AG04450 (cell line): ENCODE measurements at regions of chr2 and their contacts with region 1.

Region 1: DNA sequence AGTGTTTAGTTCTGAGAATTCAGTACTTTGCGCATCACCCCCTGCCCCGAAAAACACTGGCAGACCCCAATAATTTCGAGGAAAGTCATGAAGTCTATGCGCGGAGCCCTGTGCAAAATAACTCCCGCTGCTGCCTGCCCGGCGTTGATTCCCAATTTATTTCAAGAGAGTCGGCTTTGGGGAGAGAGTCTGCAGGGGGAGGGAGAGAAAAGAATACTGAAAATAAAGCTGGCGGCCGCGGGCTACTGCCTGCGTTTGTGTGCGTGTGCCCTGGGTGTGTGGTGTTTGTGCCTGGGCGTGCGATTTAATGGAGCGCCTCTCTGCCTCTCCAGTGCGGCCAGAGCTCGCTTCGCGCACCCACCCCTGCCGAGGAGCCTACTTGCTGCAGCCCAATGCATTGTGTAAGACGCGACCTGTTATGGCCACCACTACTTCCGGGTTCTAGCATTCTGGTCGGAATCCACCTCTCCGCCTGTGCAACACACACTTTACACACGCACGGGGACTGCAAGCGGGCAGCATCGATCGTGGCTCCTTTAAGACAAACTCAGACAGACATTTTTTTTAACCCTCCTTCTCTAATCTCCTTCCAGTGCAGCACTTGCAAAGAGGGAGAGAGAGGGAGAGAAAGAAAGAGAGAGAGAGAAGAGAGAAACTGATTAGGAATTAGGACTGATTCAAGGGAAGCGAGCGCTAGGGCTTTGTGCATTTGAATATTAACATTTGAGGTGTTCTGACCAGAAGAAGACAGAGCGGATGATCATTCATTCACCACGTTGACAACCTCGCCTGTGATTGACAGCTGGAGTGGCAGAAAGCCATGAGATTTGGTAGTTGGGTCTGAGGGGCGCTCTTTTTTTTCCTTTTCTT is at the start of gene MEIS1:
- DNase-seq: peak; percentile 99
- H3K4me3 ChIP-seq: peak within 1 kb of the TSS; percentile 91
- H3K27ac ChIP-seq: peak within 1 kb of the TSS; percentile 96
- H3K27me3 ChIP-seq: no peaks in the 10 kb centered on the region
- CTCF ChIP-seq: no peak
- polyA plus RNA-seq, gene MEIS1: 87.2 and 107 TPM in 2 replicates

Region 2: DNA sequence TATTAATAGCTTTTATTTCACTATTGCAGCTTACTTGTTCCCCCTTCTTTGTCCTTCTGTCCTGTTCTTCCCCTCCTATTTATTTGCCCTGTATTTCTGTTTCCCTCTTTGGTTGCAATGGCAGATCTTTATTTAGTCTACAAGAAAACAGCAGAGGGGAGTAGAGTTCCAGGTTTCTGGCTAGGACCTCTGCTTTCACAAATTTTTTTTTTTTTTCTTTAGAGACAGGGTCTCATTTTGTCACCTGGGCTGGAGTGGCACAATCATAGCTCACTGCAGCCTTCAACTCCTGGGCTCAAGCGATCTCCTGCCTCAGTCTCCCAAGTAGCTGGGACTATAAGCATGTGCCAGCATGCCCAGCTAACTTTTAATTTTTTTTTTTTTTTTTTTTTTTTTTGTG is 814.4 kb before region 1 on chr2:
- CTCF ChIA-PET with region 1: interaction called, 3 read pairs
- POLR2A ChIA-PET with region 1: interaction called, 10 read pairs
- DNase-seq: no peak
- H3K4me3 ChIP-seq: no peak overlapping the region
- H3K27ac ChIP-seq: no peak overlapping the region
- H3K27me3 ChIP-seq: peaks cover 29% of the 10 kb centered on the region
- CTCF ChIP-seq: peak; percentile 25

Region 3: GRCh38 chr2:66445925-66446860 is 11.3 kb after region 1 on chr2:
- CTCF ChIA-PET with region 1: interaction called, 7 read pairs
- POLR2A ChIA-PET with region 1: interaction called, 113 read pairs
- DNase-seq: no peak
- H3K4me3 ChIP-seq: peak overlapping the region; percentile 91
- H3K27ac ChIP-seq: peak overlapping the region; percentile 97
- H3K27me3 ChIP-seq: no peaks in the 10 kb centered on the region
- CTCF ChIP-seq: no peak; the same call in 1 of the 2 replicates

Region 4: DNA sequence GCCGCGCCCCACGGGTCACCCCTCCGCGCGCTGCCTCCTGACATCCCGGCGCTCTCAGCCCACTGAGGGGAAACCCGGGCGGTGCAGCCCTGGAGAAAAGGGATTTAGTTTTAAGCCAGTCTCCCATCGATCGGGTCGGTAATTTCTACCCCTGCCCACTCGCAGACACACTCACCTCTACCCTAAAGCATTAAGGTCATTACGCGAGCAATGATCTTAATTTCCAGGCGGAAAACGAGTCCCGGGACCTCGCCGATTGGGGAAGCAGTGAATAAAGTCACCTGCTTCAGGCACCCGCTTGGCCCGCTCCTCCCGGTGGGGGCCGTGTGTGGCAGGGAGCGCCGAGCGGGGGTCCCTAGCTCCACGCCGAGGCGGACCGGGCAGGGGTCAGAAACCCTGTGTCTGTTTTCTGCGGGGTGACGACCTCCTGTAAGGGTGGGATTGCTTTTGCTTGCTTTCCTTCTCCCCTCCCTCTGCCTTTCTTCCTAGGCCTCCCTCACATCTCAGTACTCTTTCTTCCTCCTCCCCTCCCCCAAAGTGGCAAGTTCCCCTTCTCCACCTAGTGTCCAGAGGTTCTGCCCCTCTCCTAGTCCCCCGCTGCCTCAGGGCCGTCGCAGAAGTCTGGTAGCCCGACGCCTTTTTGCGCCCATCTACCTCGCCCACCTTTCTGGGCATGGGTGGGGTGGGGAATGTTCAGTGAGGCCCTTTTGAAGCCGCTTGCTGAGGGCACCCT is 142.6 kb after region 1 on chr2:
- CTCF ChIA-PET with region 1: interaction called, 8 read pairs
- POLR2A ChIA-PET with region 1: interaction called, 26 read pairs
- DNase-seq: no peak
- H3K4me3 ChIP-seq: peak overlapping the region; percentile 58
- H3K27ac ChIP-seq: peak overlapping the region; percentile 96
- H3K27me3 ChIP-seq: no peaks in the 10 kb centered on the region
- CTCF ChIP-seq: peak; percentile 18